ENCODE measurements at regions of chr17 and their contacts with region 1.

Region 1: GRCh38 chr17:28750178-28751047 is 6.6 kb downstream of the TRAF4 start:
- DNase-seq: peak; percentile 89 to 98
- ATAC-seq: peak; percentile 50

Region 2: GRCh38 chr17:28916302-28916934 is 166.0 kb after region 1 on chr17:
- intact Hi-C with region 1: loop called in 1 of 2 experiments (anchors 10 kb)
- DNase-seq: peak in 1 of 2 donors; percentile 56
- ATAC-seq: peak; percentile 63